Breast epithelium (tissue), 4 donors: ENCODE measurements at regions of chr6 and their contacts with region 1.

Region 1: GRCh38 chr6:37169496-37170272 is at the start of gene PIM1:
- DNase-seq: peak; percentile 99
- H3K4me3 ChIP-seq: peak within 1 kb of the TSS; percentile 84 to 99 (median 89)
- H3K27ac ChIP-seq: peak within 1 kb of the TSS; percentile 93
- H3K4me1 ChIP-seq: peaks cover 0 to 7% of the 10 kb centered on the region in 2 donors
- H3K27me3 ChIP-seq: no peaks in the 10 kb centered on the region
- CTCF ChIP-seq: no peak
- POLR2A ChIP-seq: no peak
- total RNA-seq, gene PIM1: 17.4 to 56.0 (median 31.6) TPM

Region 2: GRCh38 chr6:37029249-37029971 is 140.3 kb before region 1 on chr6:
- intact Hi-C with region 1: loop called (anchors 10 kb)
- DNase-seq: peak in 1 of 2 donors; percentile 47
- H3K4me3 ChIP-seq: no peak overlapping the region
- H3K27ac ChIP-seq: no peak overlapping the region
- H3K4me1 ChIP-seq: no peaks in the 10 kb centered on the region
- H3K27me3 ChIP-seq: no peaks in the 10 kb centered on the region
- CTCF ChIP-seq: peak; percentile 38 to 56 (median 40)
- POLR2A ChIP-seq: no peak

Region 3: GRCh38 chr6:37059344-37060206 is 110.1 kb before region 1 on chr6:
- intact Hi-C with region 1: loop called (anchors 5 kb)
- DNase-seq: peak in 1 of 2 donors; percentile 60
- H3K4me3 ChIP-seq: peak overlapping the region in 1 of 3 donors; percentile 33
- H3K27ac ChIP-seq: peak overlapping the region; percentile 72 to 85
- H3K4me1 ChIP-seq: no peaks in the 10 kb centered on the region
- H3K27me3 ChIP-seq: no peaks in the 10 kb centered on the region
- CTCF ChIP-seq: peak; percentile 22 to 35 (median 32)
- POLR2A ChIP-seq: no peak